Activated CD4-positive, alpha-beta memory T cell treated with anti-CD3 and anti-CD28 coated beads, Interleukin-2, amount 10 ng/mL, durations not matched to agents 7 days and 5 days (primary cell): ENCODE measurements at regions of chr1 and their contacts with region 1.

Region 1: DNA sequence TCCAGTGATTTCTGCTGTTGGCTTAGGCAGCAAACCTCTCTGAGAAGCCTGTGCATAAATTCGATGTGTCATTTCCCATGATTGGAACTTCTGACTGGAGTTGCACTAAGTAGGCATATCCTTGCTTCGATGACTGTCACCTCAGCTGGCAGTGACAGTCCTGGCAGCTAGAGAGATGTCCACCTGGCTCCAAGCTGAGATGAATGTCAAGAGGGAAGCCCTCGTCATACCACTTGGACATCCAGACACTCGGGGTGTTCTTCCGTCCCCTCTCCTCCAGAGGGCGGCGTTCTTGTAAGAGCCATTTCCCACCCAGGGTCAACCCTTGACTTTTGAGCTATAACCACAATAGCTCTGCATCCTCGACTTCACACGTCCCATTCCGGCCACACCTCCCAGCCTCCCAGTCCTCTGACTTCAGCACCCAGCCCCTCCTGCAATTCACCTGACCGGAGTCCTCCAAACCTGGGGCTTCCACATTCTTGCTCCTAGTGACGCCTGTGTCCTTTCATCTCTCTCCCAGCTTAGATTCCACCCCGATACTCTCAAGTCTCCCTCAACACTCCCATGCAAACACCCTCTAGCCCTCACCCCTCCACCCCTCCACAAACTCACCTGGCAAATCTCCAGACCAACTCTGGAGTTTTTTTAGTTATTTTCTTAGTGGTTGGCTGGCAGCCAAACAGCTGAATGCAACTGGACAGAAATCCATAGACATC is 17.3 kb downstream of the CA6 start:
- DNase-seq: peak; percentile 56
- H3K4me3 Mint-ChIP-seq: no peak overlapping the region
- H3K27ac Mint-ChIP-seq: peak overlapping the region; percentile 54
- H3K4me1 Mint-ChIP-seq: peaks cover 71% of the 10 kb centered on the region
- H3K27me3 Mint-ChIP-seq: no peaks in the 10 kb centered on the region

Region 2: GRCh38 chr1:8817406-8818324 is 145.3 kb before region 1 on chr1 and contains the start of gene RERE:
- CTCF ChIA-PET with region 1: no interaction called
- POLR2A ChIA-PET with region 1: no interaction called
- DNase-seq: peak; percentile 97
- H3K4me3 Mint-ChIP-seq: peak within 1 kb of the TSS; percentile 82
- H3K27ac Mint-ChIP-seq: peak within 1 kb of the TSS; percentile 75
- H3K4me1 Mint-ChIP-seq: peaks cover 48% of the 10 kb centered on the region
- H3K27me3 Mint-ChIP-seq: peaks cover 7% of the 10 kb centered on the region
- total RNA-seq, gene RERE: 96.6 to 101 TPM

Region 3: GRCh38 chr1:8941906-8942305 is 21.1 kb before region 1 on chr1:
- CTCF ChIA-PET with region 1: interaction called, 10 read pairs
- POLR2A ChIA-PET with region 1: interaction called, 5 read pairs
- DNase-seq: no peak
- H3K4me3 Mint-ChIP-seq: no peak overlapping the region
- H3K27ac Mint-ChIP-seq: peak overlapping the region; percentile 34
- H3K4me1 Mint-ChIP-seq: peaks cover 88% of the 10 kb centered on the region
- H3K27me3 Mint-ChIP-seq: no peaks in the 10 kb centered on the region